Panc1 (cell line): ENCODE measurements at regions of chr7 and their contacts with region 1.

Region 1: GRCh38 chr7:134755401-134756022 is 23.9 kb upstream of the CALD1 start:
- DNase-seq: no peak
- ATAC-seq: no peak
- H3K4me3 ChIP-seq: no peak overlapping the region
- H3K27ac ChIP-seq: no peak overlapping the region
- H3K4me1 ChIP-seq: no peaks in the 10 kb centered on the region
- H3K27me3 ChIP-seq: no peaks in the 10 kb centered on the region
- CTCF ChIP-seq: peak; percentile 30; the same call in 1 of the 2 replicates

Region 2: DNA sequence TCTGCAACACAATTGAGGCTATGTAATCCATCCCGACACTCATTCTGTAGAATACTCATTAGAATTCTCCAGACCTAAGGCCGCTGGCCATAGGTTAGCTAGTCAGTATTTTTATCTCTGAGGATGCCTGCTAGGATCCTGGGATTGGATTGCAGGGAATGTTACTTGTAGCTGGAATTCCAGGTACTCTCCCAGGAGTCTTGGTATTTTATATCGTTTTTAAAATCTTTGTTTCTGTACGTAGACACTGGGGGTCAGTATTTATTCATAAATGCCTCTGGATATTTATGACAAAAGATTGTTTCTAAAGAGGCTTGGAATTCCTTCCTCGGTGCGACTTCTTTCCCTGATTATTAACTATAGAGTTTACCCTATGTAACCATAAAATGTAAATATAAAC is 68.7 kb before region 1 on chr7:
- CTCF ChIA-PET with region 1: no interaction called
- POLR2A ChIA-PET with region 1: no interaction called
- in situ Hi-C with region 1: no loop called
- intact Hi-C with region 1: no loop called
- DNase-seq: no peak
- ATAC-seq: peak; percentile 57
- H3K4me3 ChIP-seq: no peak overlapping the region
- H3K27ac ChIP-seq: no peak overlapping the region
- H3K4me1 ChIP-seq: no peaks in the 10 kb centered on the region
- H3K27me3 ChIP-seq: no peaks in the 10 kb centered on the region
- CTCF ChIP-seq: peak; percentile 33

Region 3: DNA sequence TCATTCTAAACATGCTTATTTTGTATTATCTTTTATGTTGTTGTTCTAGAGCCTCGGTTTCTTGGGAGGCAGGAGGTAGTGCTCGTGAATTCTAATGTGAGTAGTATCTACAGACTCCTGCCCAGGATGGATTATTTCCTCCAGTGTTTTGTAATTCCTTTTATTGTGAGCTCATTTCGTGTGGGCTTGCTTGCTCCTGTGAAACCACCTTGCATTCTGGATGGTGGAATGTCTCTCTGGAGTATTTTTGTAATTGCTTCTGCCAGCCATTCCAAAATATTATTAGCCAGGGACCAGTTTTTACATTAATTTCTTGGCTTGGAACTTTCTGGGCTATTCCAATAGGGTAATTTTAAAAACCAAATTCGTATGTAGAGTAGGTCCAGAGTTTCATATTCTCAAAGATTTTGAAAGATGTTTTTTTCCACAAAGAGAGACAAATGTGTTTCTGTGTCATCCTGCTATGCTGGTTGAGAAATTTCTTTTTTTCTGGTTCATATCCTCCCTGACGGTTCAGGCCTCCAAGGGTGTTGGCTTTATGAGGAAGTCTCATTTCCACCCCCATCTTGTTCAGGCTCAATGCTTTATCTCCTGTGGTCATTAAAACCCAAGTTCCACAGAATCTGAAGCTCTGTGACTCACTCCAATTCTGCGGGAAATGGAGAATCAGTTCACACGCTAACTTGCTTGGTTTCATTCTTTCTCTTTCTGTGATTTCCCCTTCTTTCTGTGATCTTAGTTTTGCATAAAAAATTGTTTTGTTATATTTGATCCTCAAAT is 17.8 kb before region 1 on chr7:
- CTCF ChIA-PET with region 1: no interaction called
- POLR2A ChIA-PET with region 1: no interaction called
- in situ Hi-C with region 1: no loop called
- intact Hi-C with region 1: no loop called
- DNase-seq: no peak
- ATAC-seq: no peak
- H3K4me3 ChIP-seq: no peak overlapping the region
- H3K27ac ChIP-seq: no peak overlapping the region
- H3K4me1 ChIP-seq: no peaks in the 10 kb centered on the region
- H3K27me3 ChIP-seq: no peaks in the 10 kb centered on the region
- CTCF ChIP-seq: no peak

Region 4: DNA sequence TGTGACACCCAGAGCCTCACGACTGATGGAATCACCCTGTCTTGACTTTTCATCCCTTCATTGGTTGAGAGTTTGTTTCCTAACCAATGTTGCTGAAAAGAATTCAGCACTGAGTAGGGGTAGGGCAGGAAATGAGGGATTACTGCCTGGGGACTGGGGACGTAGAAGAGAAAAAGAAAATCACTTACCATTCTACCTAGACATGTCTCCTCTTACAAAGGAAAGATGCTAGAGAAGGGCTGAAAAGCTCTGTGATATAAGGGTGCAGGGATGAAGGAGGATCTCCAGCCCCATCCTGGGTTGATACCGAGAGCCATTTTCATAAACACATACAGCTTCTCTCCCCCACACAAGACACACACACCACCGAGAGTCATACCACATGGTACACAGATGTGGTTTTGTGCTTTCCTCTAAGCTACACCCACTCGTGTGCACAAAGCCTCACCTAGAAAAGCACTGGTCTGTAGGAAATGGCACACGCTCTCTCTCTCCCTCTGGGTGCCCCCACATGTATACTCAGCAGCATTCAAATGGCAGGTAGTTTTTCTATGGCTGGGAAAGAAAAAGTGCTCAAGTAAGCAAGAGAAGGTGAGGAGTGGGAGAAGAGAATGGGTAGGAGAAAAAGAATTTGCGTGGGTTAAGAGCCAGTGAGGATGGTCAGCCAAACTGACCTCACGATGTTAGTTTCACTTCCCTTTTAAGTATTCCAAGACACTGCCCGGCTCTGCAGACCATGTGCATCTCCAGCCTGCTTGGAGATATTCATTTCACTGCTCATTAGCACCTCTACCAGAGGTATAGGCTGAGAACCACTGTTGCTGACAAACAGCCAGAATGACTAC is 109.7 kb after region 1 on chr7:
- CTCF ChIA-PET with region 1: interaction called, 13 read pairs
- POLR2A ChIA-PET with region 1: no interaction called
- in situ Hi-C with region 1: no loop called
- intact Hi-C with region 1: no loop called
- DNase-seq: no peak
- ATAC-seq: peak; percentile 38
- H3K4me3 ChIP-seq: peak overlapping the region in 1 of 2 experiments; percentile 6; a peak in 1 of 4 replicates
- H3K27ac ChIP-seq: no peak overlapping the region
- H3K4me1 ChIP-seq: no peaks in the 10 kb centered on the region
- H3K27me3 ChIP-seq: no peaks in the 10 kb centered on the region
- CTCF ChIP-seq: no peak